H1 (cell line): ENCODE measurements at regions of chr12 and their contacts with region 1.

Region 1: GRCh38 chr12:54251667-54252284 is 28.1 kb downstream of the CBX5 start:
- DNase-seq: no peak
- H3K4me3 ChIP-seq: no peak overlapping the region
- H3K27ac ChIP-seq: no peak overlapping the region
- H3K4me1 ChIP-seq: no peaks in the 10 kb centered on the region
- H3K27me3 ChIP-seq: no peaks in the 10 kb centered on the region
- CTCF ChIP-seq: peak in 2 of 3 experiments; percentile 41 to 55; a peak in 2 of 4 replicates
- EP300 ChIP-seq: no peak
- POLR2A ChIP-seq: no peak
- RAD21 ChIP-seq: peak; percentile 56 to 62

Region 2: GRCh38 chr12:54220092-54220557 is 31.7 kb before region 1 on chr12:
- CTCF ChIA-PET with region 1: interaction called, 20 read pairs
- POLR2A ChIA-PET with region 1: interaction called, 4 read pairs
- DNase-seq: peak in 1 of 2 experiments; percentile 94
- H3K4me3 ChIP-seq: no peak overlapping the region
- H3K27ac ChIP-seq: no peak overlapping the region
- H3K4me1 ChIP-seq: peaks cover 0 to 20% (median 15%) of the 10 kb centered on the region in 4 experiments; a peak in 6 of 7 replicates
- H3K27me3 ChIP-seq: peaks cover 1 to 36% (median 25%) of the 10 kb centered on the region in 4 experiments; a peak in 6 of 7 replicates
- CTCF ChIP-seq: peak; percentile 73 to 90 (median 84)
- EP300 ChIP-seq: no peak
- POLR2A ChIP-seq: no peak
- RAD21 ChIP-seq: peak; percentile 78 to 84

Region 3: GRCh38 chr12:54229624-54230212 is 22.1 kb before region 1 on chr12:
- CTCF ChIA-PET with region 1: interaction called, 20 read pairs
- POLR2A ChIA-PET with region 1: interaction called, 11 read pairs
- DNase-seq: no peak
- H3K4me3 ChIP-seq: no peak overlapping the region
- H3K27ac ChIP-seq: 0 out of 2 replicates have a peak overlapping the region, but pooled peaks have one; percentile 0
- H3K4me1 ChIP-seq: no peaks in the 10 kb centered on the region
- H3K27me3 ChIP-seq: no peaks in the 10 kb centered on the region
- CTCF ChIP-seq: no peak
- EP300 ChIP-seq: no peak
- POLR2A ChIP-seq: no peak
- RAD21 ChIP-seq: no peak